ENCODE measurements at regions of chr19 and their contacts with region 1.

Region 1: DNA sequence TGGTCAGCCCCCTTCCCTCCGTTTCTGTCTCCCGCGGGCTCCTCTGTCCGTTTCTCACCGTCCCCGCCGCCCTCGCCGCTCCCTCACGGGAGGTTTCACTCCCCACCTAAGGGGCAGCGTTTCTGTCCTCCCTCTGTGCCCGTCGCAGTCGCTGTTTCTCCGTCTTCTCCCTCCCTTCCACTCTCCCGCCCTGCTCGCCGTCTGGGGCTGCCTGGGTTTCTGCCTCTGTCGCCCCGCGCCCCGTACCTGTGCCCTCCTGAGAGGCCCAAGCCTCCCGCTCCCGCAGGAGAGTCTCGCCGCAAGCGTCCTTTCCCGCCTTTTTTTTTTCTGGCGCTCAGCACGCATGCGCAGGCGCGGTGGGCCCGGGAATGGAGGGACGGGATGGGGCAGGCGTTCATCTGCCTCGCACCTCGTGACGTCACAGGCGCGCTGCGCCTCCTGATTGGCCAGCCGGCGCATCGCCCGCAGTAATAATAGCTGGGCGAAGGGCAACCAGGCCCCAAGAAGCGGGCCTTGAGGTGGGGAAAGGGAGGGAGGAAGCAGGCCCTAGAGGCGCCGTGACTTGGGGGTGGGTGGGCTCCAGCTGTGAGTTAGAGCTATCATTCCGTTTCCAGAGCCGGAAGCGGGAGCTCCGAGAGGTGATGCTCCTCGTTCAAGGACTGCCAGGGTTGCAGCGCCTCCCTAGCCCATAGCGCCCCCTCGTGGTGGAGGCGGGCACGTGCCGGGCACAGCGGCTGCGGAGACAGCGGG is 15.4 kb downstream of the SSC5D start:
- DNase-seq: peak; percentile 92
- H3K4me3 Mint-ChIP-seq: peak overlapping the region; percentile 69
- H3K27ac Mint-ChIP-seq: no peak overlapping the region
- H3K4me1 Mint-ChIP-seq: no peaks in the 10 kb centered on the region
- H3K27me3 Mint-ChIP-seq: no peaks in the 10 kb centered on the region
- CTCF ChIP-seq: peak; percentile 98

Region 2: DNA sequence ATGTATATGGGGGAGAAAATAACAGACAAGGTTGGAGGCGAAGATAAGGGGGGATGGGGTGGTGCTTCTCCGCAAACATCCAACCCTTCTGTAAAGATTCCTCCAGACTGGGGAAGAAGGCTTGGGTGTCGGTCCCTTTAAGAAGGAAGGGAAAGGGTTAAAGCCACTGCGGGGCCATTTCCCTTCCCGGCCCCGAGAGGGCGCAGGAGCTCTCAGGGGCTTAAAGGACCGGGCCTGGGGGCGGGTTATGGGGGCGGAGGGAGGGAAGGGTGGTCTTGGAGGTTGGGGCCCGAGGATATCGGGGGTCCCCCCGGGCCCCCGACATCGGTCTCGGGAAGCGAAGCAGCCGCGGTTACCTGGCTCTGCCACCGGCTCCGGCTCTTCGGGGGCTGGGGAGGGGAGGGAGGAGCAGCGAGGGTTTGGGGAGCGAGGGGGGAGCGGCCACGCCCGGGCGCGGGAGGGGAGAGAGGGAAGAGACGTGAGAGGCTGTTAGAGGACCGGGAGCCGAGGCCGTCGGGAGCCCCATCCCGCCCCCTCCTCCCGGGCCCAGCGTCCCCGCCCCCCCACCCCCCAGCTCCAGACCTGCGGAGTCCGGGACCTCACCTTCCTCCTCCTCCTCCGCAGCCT is 357.5 kb before region 1 on chr19:
- CTCF ChIA-PET with region 1: interaction called, 48 read pairs
- POLR2A ChIA-PET with region 1: interaction called, 4 read pairs
- intact Hi-C with region 1: no loop called
- DNase-seq: peak; percentile 51
- H3K4me3 Mint-ChIP-seq: peak overlapping the region; percentile 69
- H3K27ac Mint-ChIP-seq: no peak overlapping the region
- H3K4me1 Mint-ChIP-seq: peaks cover 14% of the 10 kb centered on the region
- H3K27me3 Mint-ChIP-seq: peaks cover 24% of the 10 kb centered on the region
- CTCF ChIP-seq: peak; percentile 81

Region 3: GRCh38 chr19:55418185-55418584 is 85.5 kb before region 1 on chr19:
- CTCF ChIA-PET with region 1: interaction called, 3 read pairs
- POLR2A ChIA-PET with region 1: no interaction called
- intact Hi-C with region 1: loop called (anchors 10 kb)
- DNase-seq: peak; percentile 86
- H3K4me3 Mint-ChIP-seq: no peak overlapping the region
- H3K27ac Mint-ChIP-seq: no peak overlapping the region
- H3K4me1 Mint-ChIP-seq: no peaks in the 10 kb centered on the region
- H3K27me3 Mint-ChIP-seq: no peaks in the 10 kb centered on the region
- CTCF ChIP-seq: peak; percentile 86

Region 4: DNA sequence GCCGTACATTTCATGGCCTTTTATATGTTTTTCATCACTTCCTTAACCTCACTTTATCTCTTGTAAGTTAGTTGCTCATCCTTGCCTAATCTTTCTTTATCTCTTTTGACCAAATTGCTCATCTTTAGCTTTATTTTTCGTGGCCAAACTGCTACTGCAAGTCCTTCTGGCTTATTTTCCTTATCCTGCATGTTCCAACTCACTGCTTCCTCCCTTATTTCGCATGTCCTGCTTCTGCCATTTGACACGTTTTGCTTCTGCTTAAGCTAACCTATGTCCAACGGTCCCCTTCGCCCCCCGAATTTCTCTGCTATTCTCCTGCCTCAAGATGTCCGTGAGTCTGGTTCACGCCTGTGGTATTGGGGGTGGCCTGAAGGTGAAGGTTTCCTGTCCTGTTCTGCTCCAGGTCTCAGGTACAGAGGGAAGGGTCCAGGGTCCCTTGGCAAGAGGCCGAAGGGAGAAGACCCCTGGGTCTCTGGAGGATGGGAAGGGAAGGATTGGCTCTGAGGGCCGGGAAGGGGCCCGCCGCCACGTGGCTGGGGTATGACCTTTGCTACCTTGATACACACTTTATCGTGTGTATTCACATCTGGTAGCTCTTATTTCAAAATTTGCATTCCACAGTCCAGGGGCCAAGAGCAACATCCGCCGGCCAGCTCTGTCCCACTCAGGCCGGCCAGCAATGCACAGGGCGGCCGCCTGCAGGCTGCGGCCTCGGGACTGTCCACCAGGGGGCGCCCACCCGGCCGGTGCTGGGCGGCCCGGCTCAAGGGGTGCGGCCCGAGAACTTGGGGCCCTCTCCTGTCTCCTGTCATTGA is 36.2 kb before region 1 on chr19:
- CTCF ChIA-PET with region 1: interaction called, 64 read pairs
- POLR2A ChIA-PET with region 1: interaction called, 8 read pairs
- intact Hi-C with region 1: loop called (anchors 1 kb)
- DNase-seq: peak; percentile 65
- H3K4me3 Mint-ChIP-seq: no peak overlapping the region
- H3K27ac Mint-ChIP-seq: no peak overlapping the region
- H3K4me1 Mint-ChIP-seq: peaks cover 2% of the 10 kb centered on the region
- H3K27me3 Mint-ChIP-seq: no peaks in the 10 kb centered on the region
- CTCF ChIP-seq: peak; percentile 98

Region 5: DNA sequence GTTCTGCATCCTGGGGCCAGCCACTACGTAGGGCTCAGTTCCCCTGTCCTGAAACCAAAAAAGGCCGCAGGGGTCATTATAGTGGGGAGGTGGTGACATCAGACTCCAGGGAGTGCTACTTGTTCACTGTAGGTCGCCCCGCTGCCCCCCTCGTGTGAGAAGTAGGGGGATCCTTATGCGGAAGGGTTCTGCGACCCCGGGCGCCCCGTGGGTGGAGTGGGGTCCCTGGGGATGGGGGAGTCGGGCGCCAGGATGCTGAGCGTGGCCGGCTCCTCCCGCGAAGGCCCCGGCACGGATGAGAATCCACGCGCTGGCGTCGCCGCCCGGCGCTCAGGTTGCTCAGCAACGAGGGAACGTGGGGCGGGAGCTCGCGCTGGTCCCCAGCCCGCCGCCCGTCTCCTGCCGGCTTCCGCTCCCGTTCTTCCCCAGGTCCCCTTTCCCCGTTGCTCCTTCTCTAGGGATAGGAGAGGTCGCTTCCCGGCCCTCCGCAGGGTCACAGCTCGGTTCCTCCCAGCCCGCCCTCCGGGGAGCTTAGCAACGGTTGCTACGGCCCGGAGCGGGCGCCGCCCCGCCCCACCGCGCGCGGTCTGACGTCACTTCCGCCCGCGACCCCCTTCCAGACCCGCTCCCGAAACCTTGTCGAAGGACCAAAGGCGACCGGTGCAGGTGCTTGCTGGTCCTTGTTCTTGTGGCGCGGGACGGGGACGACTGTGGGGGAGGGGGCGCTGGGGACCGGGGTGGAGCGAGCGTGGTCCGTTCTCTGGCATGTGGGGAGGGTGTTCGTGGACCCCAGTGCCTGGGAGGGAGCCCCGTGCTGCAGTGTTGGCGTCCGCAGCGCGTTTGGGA is 18.9 kb before region 1 on chr19 and contains the start of gene NAT14:
- CTCF ChIA-PET with region 1: interaction called, 16 read pairs
- POLR2A ChIA-PET with region 1: interaction called, 4 read pairs
- intact Hi-C with region 1: no loop called
- DNase-seq: peak; percentile 50
- H3K4me3 Mint-ChIP-seq: peak within 1 kb of the TSS; percentile 69
- H3K27ac Mint-ChIP-seq: peak within 1 kb of the TSS; percentile 87
- H3K4me1 Mint-ChIP-seq: peaks cover 17% of the 10 kb centered on the region
- H3K27me3 Mint-ChIP-seq: no peaks in the 10 kb centered on the region
- CTCF ChIP-seq: no peak
- total RNA-seq, gene NAT14: 16.6 and 22.8 TPM in 2 replicates

Region 6: DNA sequence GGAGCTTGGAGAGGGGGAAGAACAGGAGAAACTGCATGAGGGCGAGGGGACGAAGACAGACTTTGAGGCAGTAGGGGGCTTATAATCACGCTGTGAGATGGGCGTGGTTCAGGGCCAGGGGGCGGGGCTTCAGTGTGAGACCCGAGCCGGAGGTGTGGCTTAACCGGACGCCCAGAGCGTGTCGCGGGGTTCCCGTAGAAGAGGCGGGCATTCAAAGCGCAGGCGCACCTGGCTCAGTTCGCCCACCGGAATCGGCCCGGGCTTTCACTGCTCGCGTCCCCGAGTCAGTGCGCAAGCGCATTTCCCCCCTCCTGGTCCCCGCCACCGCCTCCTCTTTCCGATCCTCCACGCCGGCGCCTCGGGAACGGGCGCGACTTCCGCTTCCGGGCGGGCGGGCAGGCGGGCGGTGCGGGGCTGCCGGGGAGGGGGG is 101.5 kb after region 1 on chr19:
- CTCF ChIA-PET with region 1: interaction called, 23 read pairs
- POLR2A ChIA-PET with region 1: interaction called, 4 read pairs
- intact Hi-C with region 1: no loop called
- DNase-seq: peak; percentile 99
- H3K4me3 Mint-ChIP-seq: peak overlapping the region; percentile 84
- H3K27ac Mint-ChIP-seq: peak overlapping the region; percentile 80
- H3K4me1 Mint-ChIP-seq: peaks cover 46% of the 10 kb centered on the region
- H3K27me3 Mint-ChIP-seq: no peaks in the 10 kb centered on the region
- CTCF ChIP-seq: no peak

Region 7: DNA sequence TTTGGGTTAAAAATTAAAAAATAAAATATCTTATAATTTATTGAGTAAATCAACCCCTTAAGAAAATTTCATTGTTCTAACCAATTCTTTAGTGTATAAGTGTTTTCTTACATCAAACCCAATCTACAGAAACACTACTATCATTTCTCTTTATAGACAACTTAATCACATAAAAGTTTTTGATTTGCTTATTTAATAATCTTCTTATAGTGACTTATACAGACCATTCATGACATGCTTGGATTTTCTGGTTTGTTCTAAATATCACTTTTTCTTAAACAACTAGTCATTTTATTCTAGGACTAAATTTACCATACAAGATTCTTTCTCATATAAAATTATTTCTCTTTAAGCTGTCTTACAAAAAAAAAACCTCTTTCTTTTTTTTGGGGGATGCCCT is 838.3 kb after region 1 on chr19:
- CTCF ChIA-PET with region 1: no interaction called
- POLR2A ChIA-PET with region 1: no interaction called
- intact Hi-C with region 1: no loop called
- DNase-seq: no peak
- H3K4me3 Mint-ChIP-seq: no peak overlapping the region
- H3K27ac Mint-ChIP-seq: no peak overlapping the region
- H3K4me1 Mint-ChIP-seq: no peaks in the 10 kb centered on the region
- H3K27me3 Mint-ChIP-seq: no peaks in the 10 kb centered on the region
- CTCF ChIP-seq: no peak